HCT116 (cell line): ENCODE measurements at regions of chr1 and their contacts with region 1.

Region 1: DNA sequence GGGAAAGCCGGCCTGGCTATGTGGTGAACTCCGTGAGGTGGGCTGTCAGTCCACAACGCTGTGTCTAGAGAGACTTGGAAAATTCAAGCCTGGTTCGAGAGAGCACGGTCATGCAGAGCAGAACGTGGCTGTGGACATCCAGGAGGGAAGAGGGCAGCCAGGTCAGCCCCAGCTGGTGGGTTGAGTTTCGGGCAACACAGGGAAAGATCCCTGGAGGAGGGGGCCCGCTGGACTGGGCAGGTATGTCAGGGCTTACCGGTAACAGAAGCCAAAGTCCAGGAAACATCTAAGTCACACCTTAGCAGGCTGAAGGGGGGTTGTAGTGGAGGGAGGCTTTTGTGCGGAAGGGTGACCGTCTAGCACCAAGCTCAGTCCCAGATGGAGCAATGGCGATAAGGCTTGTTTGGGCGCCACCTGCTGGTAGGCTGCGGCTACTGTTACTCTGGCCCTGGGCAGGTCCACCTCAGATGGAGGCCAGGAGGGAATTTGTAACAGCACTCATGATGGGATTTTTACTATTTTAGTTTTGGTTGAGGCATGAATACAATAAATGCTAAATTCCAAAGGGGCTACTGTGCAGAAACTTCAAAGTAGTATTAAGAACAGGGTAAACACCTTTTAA is 143.3 kb upstream of the ZNF644 start:
- DNase-seq: peak; percentile 44
- ATAC-seq: peak; percentile 97
- H3K4me3 ChIP-seq: no peak overlapping the region
- H3K27ac ChIP-seq: no peak overlapping the region
- H3K4me1 ChIP-seq: no peaks in the 10 kb centered on the region
- H3K27me3 ChIP-seq: no peaks in the 10 kb centered on the region
- CTCF ChIP-seq: peak; percentile 80 to 98 (median 96)
- POLR2A ChIP-seq: no peak
- RAD21 ChIP-seq: peak; percentile 85

Region 2: GRCh38 chr1:90045853-90046563 is 1119.1 kb before region 1 on chr1:
- CTCF ChIA-PET with region 1: interaction called, 4 read pairs
- POLR2A ChIA-PET with region 1: no interaction called
- RAD21 ChIA-PET with region 1: no interaction called
- intact Hi-C with region 1: loop called (anchors 5 kb)
- DNase-seq: peak; percentile 8
- ATAC-seq: peak; percentile 81
- H3K4me3 ChIP-seq: no peak overlapping the region
- H3K27ac ChIP-seq: no peak overlapping the region
- H3K4me1 ChIP-seq: no peaks in the 10 kb centered on the region
- H3K27me3 ChIP-seq: no peaks in the 10 kb centered on the region
- CTCF ChIP-seq: peak; percentile 29 to 73 (median 69); a peak in 5 of 6 replicates
- POLR2A ChIP-seq: no peak
- RAD21 ChIP-seq: peak; percentile 71

Region 3: GRCh38 chr1:90133133-90133532 is 1032.0 kb before region 1 on chr1:
- CTCF ChIA-PET with region 1: interaction called, 20 read pairs
- POLR2A ChIA-PET with region 1: no interaction called
- RAD21 ChIA-PET with region 1: no interaction called
- intact Hi-C with region 1: no loop called
- DNase-seq: peak; percentile 31
- ATAC-seq: peak; percentile 88
- H3K4me3 ChIP-seq: no peak overlapping the region
- H3K27ac ChIP-seq: no peak overlapping the region
- H3K4me1 ChIP-seq: no peaks in the 10 kb centered on the region
- H3K27me3 ChIP-seq: peaks cover 17% of the 10 kb centered on the region; the same call in 1 of the 2 replicates
- CTCF ChIP-seq: peak; percentile 49 to 67 (median 55); a peak in 5 of 6 replicates
- POLR2A ChIP-seq: no peak
- RAD21 ChIP-seq: peak; percentile 71

Region 4: GRCh38 chr1:90616395-90616794 is 548.7 kb before region 1 on chr1:
- CTCF ChIA-PET with region 1: interaction called, 16 read pairs
- POLR2A ChIA-PET with region 1: no interaction called
- RAD21 ChIA-PET with region 1: no interaction called
- intact Hi-C with region 1: no loop called
- DNase-seq: peak; percentile 18
- ATAC-seq: peak; percentile 80
- H3K4me3 ChIP-seq: no peak overlapping the region
- H3K27ac ChIP-seq: no peak overlapping the region
- H3K4me1 ChIP-seq: no peaks in the 10 kb centered on the region
- H3K27me3 ChIP-seq: no peaks in the 10 kb centered on the region; the same call in 1 of the 2 replicates
- CTCF ChIP-seq: peak; percentile 17 to 57 (median 56); a peak in 4 of 6 replicates
- POLR2A ChIP-seq: no peak
- RAD21 ChIP-seq: peak; percentile 32; the same call in 1 of the 2 replicates

Region 5: GRCh38 chr1:91021686-91022517 is 143.2 kb before region 1 on chr1 and contains the start of gene ZNF644:
- CTCF ChIA-PET with region 1: interaction called, 22 read pairs
- POLR2A ChIA-PET with region 1: no interaction called
- RAD21 ChIA-PET with region 1: no interaction called
- intact Hi-C with region 1: no loop called
- DNase-seq: peak; percentile 83
- ATAC-seq: peak; percentile 86
- H3K4me3 ChIP-seq: peak within 1 kb of the TSS; percentile 51 to 77
- H3K27ac ChIP-seq: peak within 1 kb of the TSS; percentile 96
- H3K4me1 ChIP-seq: peaks cover 17 to 45% of the 10 kb centered on the region in 2 experiments
- H3K27me3 ChIP-seq: no peaks in the 10 kb centered on the region
- CTCF ChIP-seq: no peak
- POLR2A ChIP-seq: peak; percentile 75
- RAD21 ChIP-seq: no peak
- total RNA-seq, gene ZNF644: 55.9 TPM

Region 6: DNA sequence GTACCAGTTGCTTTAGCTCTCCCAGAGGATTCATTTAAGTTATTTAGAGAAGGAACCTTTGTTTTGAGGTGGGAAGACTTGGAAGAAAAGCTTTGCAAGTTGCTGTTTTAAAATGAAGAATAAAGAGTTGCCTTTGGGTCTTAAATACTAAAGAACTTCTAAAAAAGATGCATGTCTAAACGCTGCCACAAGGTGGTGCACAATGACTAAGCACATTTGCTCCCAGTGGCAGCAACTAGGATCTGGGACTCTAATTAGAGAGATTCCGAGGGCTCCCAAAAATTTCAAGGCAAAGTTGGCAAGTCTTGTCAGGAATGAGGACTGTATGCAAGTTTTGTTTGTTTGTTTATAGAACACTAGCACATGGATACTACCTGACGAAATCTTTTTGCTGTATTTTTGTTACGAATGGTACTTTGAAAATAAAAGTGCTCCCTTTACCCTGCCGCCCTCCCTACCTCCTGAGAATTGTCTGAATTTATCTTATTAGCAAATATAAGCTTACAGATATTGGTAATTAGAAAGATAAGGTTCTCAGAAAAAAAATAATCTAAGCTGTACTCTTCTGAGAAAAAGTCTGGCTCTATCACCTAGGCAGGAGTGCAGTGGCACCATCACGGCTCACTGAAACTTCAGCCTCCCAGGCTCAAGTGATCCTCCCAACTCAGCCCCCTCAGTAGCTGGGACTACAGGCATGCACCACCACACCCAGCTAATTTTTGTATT is 117.7 kb after region 1 on chr1:
- CTCF ChIA-PET with region 1: interaction called, 204 read pairs
- POLR2A ChIA-PET with region 1: interaction called, 9 read pairs
- RAD21 ChIA-PET with region 1: interaction called, 22 to 29 read pairs
- intact Hi-C with region 1: loop called (anchors 1 kb)
- DNase-seq: peak; percentile 71
- ATAC-seq: peak; percentile 83
- H3K4me3 ChIP-seq: no peak overlapping the region
- H3K27ac ChIP-seq: no peak overlapping the region
- H3K4me1 ChIP-seq: peaks cover 2 to 7% of the 10 kb centered on the region in 2 experiments; a peak in 2 of 4 replicates
- H3K27me3 ChIP-seq: no peaks in the 10 kb centered on the region
- CTCF ChIP-seq: peak; percentile 71 to 82 (median 80)
- POLR2A ChIP-seq: no peak
- RAD21 ChIP-seq: peak; percentile 90

Region 7: GRCh38 chr1:91500756-91501522 is 335.8 kb after region 1 on chr1 and contains the start of gene CDC7:
- CTCF ChIA-PET with region 1: interaction called, 4 read pairs
- POLR2A ChIA-PET with region 1: no interaction called
- RAD21 ChIA-PET with region 1: no interaction called
- intact Hi-C with region 1: loop called (anchors 10 kb)
- DNase-seq: peak; percentile 85
- ATAC-seq: peak; percentile 89
- H3K4me3 ChIP-seq: peak within 1 kb of the TSS; percentile 61 to 63
- H3K27ac ChIP-seq: peak within 1 kb of the TSS; percentile 90
- H3K4me1 ChIP-seq: peaks cover 7 to 27% of the 10 kb centered on the region in 2 experiments
- H3K27me3 ChIP-seq: no peaks in the 10 kb centered on the region
- CTCF ChIP-seq: peak in 2 of 3 experiments; percentile 35 to 38; a peak in 5 of 6 replicates
- POLR2A ChIP-seq: peak; percentile 48
- RAD21 ChIP-seq: 0 out of 2 replicates have a peak, but pooled peaks have one; percentile 35
- total RNA-seq, gene CDC7: 24.5 TPM